Aorta (tissue), 5 donors: ENCODE measurements at regions of chr15 and their contacts with region 1.

Region 1: GRCh38 chr15:98177924-98178592 is 217.6 kb downstream of the ARRDC4 start:
- DNase-seq: no peak
- ATAC-seq: peak; percentile 67
- H3K4me3 ChIP-seq: no peak overlapping the region
- H3K27ac ChIP-seq: no peak overlapping the region
- H3K4me1 ChIP-seq: no peaks in the 10 kb centered on the region
- H3K27me3 ChIP-seq: no peaks in the 10 kb centered on the region

Region 2: DNA sequence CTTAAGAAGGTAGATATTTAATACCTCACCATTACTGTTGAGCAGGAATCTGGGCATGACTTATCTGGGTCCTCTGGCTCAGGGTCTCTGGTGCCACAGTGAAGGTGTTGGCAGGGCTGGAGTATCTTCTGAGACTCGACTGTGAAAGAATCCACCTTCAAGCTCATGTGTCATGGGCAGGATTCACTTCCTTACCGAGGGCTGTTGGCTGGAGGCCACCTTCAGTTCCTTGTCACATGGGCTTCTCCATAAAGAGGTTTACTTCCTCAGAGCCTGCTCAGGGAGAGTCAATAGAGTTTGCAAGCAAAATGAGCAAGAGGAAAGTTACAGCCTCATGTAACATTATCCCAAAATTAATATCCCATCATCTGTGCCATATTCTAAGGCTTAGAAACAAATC is 1388.1 kb before region 1 on chr15:
- intact Hi-C with region 1: no loop called
- DNase-seq: no peak
- ATAC-seq: no peak
- H3K4me3 ChIP-seq: no peak overlapping the region
- H3K27ac ChIP-seq: no peak overlapping the region
- H3K4me1 ChIP-seq: no peaks in the 10 kb centered on the region
- H3K27me3 ChIP-seq: no peaks in the 10 kb centered on the region

Region 3: DNA sequence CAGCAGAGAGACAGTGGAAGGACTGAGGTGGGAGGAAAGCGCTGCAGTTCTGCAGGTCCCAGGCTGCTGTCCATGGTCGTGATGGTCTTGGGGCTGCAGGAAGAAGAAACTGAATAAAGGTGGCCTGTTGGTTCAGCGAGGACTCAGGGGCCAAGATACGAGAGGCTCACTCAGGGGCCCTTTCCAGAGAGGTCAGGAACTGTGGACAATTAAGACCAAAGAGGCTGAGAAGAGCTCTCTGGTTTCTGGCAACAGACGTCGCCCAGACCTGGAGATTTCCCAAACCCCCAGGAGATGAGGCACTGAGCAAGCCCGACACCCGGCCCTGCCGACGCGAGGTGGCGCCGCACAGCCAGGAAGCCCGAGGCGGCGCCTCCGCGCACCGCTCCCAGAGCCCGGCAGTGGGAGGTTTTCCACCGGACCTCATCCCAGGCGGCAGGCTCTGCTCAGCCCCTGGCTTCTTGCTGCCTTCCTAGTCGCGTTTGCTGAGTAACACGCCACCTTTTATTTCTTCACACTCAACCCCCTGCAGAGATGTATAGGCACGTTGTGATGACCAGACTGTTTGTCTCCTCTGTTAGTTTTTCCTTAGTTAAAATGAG is 274.0 kb before region 1 on chr15:
- intact Hi-C with region 1: loop called (anchors 5 to 10 kb)
- DNase-seq: peak; percentile 80 to 91
- ATAC-seq: peak; percentile 74
- H3K4me3 ChIP-seq: no peak overlapping the region
- H3K27ac ChIP-seq: no peak overlapping the region
- H3K4me1 ChIP-seq: no peaks in the 10 kb centered on the region
- H3K27me3 ChIP-seq: no peaks in the 10 kb centered on the region